GM12878 (cell line): ENCODE measurements at regions of chr7 and their contacts with region 1.

Region 1: GRCh38 chr7:29574659-29575058 is 11.0 kb downstream of the PRR15 start:
- DNase-seq: no peak
- ATAC-seq: no peak
- H3K4me3 ChIP-seq: no peak overlapping the region
- H3K27ac ChIP-seq: no peak overlapping the region
- H3K4me1 ChIP-seq: no peaks in the 10 kb centered on the region
- H3K27me3 ChIP-seq: no peaks in the 10 kb centered on the region
- CTCF ChIP-seq: no peak
- EP300 ChIP-seq: no peak
- POLR2A ChIP-seq: no peak
- RAD21 ChIP-seq: no peak

Region 2: GRCh38 chr7:29435167-29435566 is 139.5 kb before region 1 on chr7:
- CTCF ChIA-PET with region 1: no interaction called
- POLR2A ChIA-PET with region 1: no interaction called
- RAD21 ChIA-PET with region 1: no interaction called
- SMC1A ChIA-PET with region 1: no interaction called
- in situ Hi-C with region 1: no loop called
- intact Hi-C with region 1: no loop called
- DNase-seq: no peak
- ATAC-seq: peak; percentile 20; the same call in 1 of the 3 replicates
- H3K4me3 ChIP-seq: no peak overlapping the region
- H3K27ac ChIP-seq: no peak overlapping the region
- H3K4me1 ChIP-seq: no peaks in the 10 kb centered on the region
- H3K27me3 ChIP-seq: no peaks in the 10 kb centered on the region; a peak in 1 of 4 replicates
- CTCF ChIP-seq: no peak
- EP300 ChIP-seq: no peak
- POLR2A ChIP-seq: no peak
- RAD21 ChIP-seq: no peak

Region 3: GRCh38 chr7:29538389-29538788 is 36.3 kb before region 1 on chr7:
- CTCF ChIA-PET with region 1: interaction called, 4 read pairs
- POLR2A ChIA-PET with region 1: no interaction called
- RAD21 ChIA-PET with region 1: no interaction called
- SMC1A ChIA-PET with region 1: no interaction called
- in situ Hi-C with region 1: no loop called
- intact Hi-C with region 1: loop called (anchors 2 kb)
- DNase-seq: no peak
- ATAC-seq: no peak
- H3K4me3 ChIP-seq: no peak overlapping the region
- H3K27ac ChIP-seq: no peak overlapping the region
- H3K4me1 ChIP-seq: no peaks in the 10 kb centered on the region
- H3K27me3 ChIP-seq: no peaks in the 10 kb centered on the region
- CTCF ChIP-seq: no peak
- EP300 ChIP-seq: no peak
- POLR2A ChIP-seq: no peak
- RAD21 ChIP-seq: no peak

Region 4: GRCh38 chr7:29636009-29636351 is 61.3 kb after region 1 on chr7:
- CTCF ChIA-PET with region 1: no interaction called
- POLR2A ChIA-PET with region 1: no interaction called
- RAD21 ChIA-PET with region 1: no interaction called
- SMC1A ChIA-PET with region 1: no interaction called
- in situ Hi-C with region 1: no loop called
- intact Hi-C with region 1: no loop called
- DNase-seq: no peak
- ATAC-seq: no peak
- H3K4me3 ChIP-seq: no peak overlapping the region
- H3K27ac ChIP-seq: no peak overlapping the region
- H3K4me1 ChIP-seq: no peaks in the 10 kb centered on the region
- H3K27me3 ChIP-seq: no peaks in the 10 kb centered on the region; a peak in 1 of 4 replicates
- CTCF ChIP-seq: no peak
- EP300 ChIP-seq: no peak
- POLR2A ChIP-seq: no peak
- RAD21 ChIP-seq: no peak